ENCODE measurements at regions of chr4 and their contacts with region 1.

Region 1: GRCh38 chr4:77600521-77601451 is 4.8 kb upstream of the CXCL13 start:
- DNase-seq: peak; percentile 56
- H3K4me3 Mint-ChIP-seq: no peak overlapping the region
- H3K27ac Mint-ChIP-seq: peak overlapping the region; percentile 29
- H3K4me1 Mint-ChIP-seq: peaks cover 23% of the 10 kb centered on the region
- H3K27me3 Mint-ChIP-seq: no peaks in the 10 kb centered on the region
- CTCF ChIP-seq: peak; percentile 83

Region 2: GRCh38 chr4:77367638-77368037 is 233.1 kb before region 1 on chr4:
- CTCF ChIA-PET with region 1: interaction called, 27 read pairs
- POLR2A ChIA-PET with region 1: no interaction called
- intact Hi-C with region 1: no loop called
- DNase-seq: no peak
- H3K4me3 Mint-ChIP-seq: no peak overlapping the region
- H3K27ac Mint-ChIP-seq: no peak overlapping the region
- H3K4me1 Mint-ChIP-seq: no peaks in the 10 kb centered on the region
- H3K27me3 Mint-ChIP-seq: no peaks in the 10 kb centered on the region
- CTCF ChIP-seq: no peak

Region 3: GRCh38 chr4:77418333-77419038 is 182.3 kb before region 1 on chr4:
- CTCF ChIA-PET with region 1: interaction called, 11 read pairs
- POLR2A ChIA-PET with region 1: no interaction called
- intact Hi-C with region 1: no loop called
- DNase-seq: peak; percentile 34
- H3K4me3 Mint-ChIP-seq: no peak overlapping the region
- H3K27ac Mint-ChIP-seq: no peak overlapping the region
- H3K4me1 Mint-ChIP-seq: no peaks in the 10 kb centered on the region
- H3K27me3 Mint-ChIP-seq: peaks cover 28% of the 10 kb centered on the region
- CTCF ChIP-seq: peak; percentile 19

Region 4: GRCh38 chr4:77465271-77465670 is 135.5 kb before region 1 on chr4:
- CTCF ChIA-PET with region 1: interaction called, 143 read pairs
- POLR2A ChIA-PET with region 1: interaction called, 5 read pairs
- intact Hi-C with region 1: loop called (anchors 1 kb)
- DNase-seq: peak; percentile 45
- H3K4me3 Mint-ChIP-seq: no peak overlapping the region
- H3K27ac Mint-ChIP-seq: no peak overlapping the region
- H3K4me1 Mint-ChIP-seq: no peaks in the 10 kb centered on the region
- H3K27me3 Mint-ChIP-seq: no peaks in the 10 kb centered on the region
- CTCF ChIP-seq: peak; percentile 61

Region 5: DNA sequence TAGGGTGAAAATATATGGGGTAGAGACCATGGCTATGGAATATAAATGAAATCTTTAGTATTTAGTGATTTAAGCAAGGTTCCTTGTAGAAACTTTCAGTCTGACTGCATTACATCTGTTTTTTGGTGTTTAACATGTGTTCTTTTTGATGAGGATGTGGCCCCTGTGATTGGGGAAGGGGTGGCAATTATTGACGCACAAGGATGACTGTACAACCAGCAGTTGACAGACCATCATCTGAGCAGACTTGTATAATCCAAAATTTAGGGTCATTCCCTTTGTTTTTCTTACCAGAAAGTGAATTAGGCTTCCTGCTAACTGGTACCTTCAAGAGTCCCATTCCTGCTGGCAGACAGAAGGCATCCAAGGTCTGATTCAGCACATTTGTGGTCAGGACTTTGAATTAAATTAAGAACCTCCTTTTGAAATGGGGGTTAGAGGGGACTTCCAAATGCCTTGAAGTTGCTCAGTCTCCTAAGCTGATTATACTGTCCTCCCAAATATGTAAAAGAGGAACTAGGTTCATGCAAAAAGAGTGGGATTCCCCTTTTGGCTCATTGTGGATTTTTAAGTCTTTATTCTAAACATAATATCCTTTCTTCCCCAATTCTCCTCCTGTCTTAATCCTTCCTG is 107.5 kb before region 1 on chr4:
- CTCF ChIA-PET with region 1: interaction called, 13 read pairs
- POLR2A ChIA-PET with region 1: no interaction called
- intact Hi-C with region 1: no loop called
- DNase-seq: no peak
- H3K4me3 Mint-ChIP-seq: no peak overlapping the region
- H3K27ac Mint-ChIP-seq: no peak overlapping the region
- H3K4me1 Mint-ChIP-seq: peaks cover 10% of the 10 kb centered on the region
- H3K27me3 Mint-ChIP-seq: no peaks in the 10 kb centered on the region
- CTCF ChIP-seq: no peak

Region 6: DNA sequence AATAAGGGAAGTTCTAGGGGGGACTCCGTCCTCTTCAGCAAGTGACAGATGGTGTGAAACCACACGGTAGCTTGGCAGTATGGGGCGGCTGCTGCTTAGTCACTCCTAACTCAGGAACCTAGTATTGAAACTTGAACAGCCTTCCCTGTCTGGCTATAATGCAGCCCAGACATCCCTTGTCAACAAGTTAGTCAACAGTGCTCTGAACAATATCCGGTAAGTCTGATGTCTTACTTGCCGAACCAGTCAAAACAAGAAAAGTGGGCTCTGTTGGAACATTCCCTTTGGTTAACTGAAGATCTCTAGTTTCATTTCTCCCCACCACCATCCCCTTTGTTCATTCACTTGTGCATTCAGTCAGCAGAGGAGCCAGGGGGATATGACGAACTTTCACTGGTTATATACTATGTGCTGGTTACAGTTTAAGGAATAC is 13.8 kb before region 1 on chr4:
- CTCF ChIA-PET with region 1: interaction called, 10 read pairs
- POLR2A ChIA-PET with region 1: interaction called, 6 read pairs
- intact Hi-C with region 1: no loop called
- DNase-seq: peak; percentile 58
- H3K4me3 Mint-ChIP-seq: no peak overlapping the region
- H3K27ac Mint-ChIP-seq: peak overlapping the region; percentile 72
- H3K4me1 Mint-ChIP-seq: peaks cover 22% of the 10 kb centered on the region
- H3K27me3 Mint-ChIP-seq: no peaks in the 10 kb centered on the region
- CTCF ChIP-seq: no peak

Region 7: GRCh38 chr4:77618383-77619122 is 17.8 kb after region 1 on chr4:
- CTCF ChIA-PET with region 1: interaction called, 51 read pairs
- POLR2A ChIA-PET with region 1: interaction called, 3 read pairs
- intact Hi-C with region 1: no loop called
- DNase-seq: peak; percentile 78
- H3K4me3 Mint-ChIP-seq: no peak overlapping the region
- H3K27ac Mint-ChIP-seq: peak overlapping the region; percentile 71
- H3K4me1 Mint-ChIP-seq: peaks cover 16% of the 10 kb centered on the region
- H3K27me3 Mint-ChIP-seq: no peaks in the 10 kb centered on the region
- CTCF ChIP-seq: peak; percentile 74

Region 8: DNA sequence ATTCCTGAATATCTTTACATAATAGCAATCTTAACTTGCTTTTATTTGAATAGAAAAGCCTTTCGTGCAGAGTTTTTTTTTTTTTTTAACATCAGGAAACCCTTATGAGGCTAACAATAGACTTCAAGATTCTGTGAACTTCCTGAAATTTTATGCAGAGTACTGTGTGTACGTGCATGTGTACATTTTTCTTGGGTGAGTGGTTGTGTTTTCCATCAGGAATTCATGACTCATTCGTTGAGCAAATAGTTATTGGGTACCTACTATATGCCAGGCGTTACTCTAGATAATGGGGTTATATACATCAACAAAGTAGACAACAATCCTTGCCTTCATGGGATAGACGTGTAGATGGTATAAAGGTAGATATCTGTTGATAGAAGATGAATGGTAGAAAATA is 320.9 kb after region 1 on chr4:
- CTCF ChIA-PET with region 1: no interaction called
- POLR2A ChIA-PET with region 1: no interaction called
- intact Hi-C with region 1: no loop called
- DNase-seq: peak; percentile 87
- H3K4me3 Mint-ChIP-seq: no peak overlapping the region
- H3K27ac Mint-ChIP-seq: peak overlapping the region; percentile 95
- H3K4me1 Mint-ChIP-seq: peaks cover 37% of the 10 kb centered on the region
- H3K27me3 Mint-ChIP-seq: no peaks in the 10 kb centered on the region
- CTCF ChIP-seq: no peak